ENCODE measurements at regions of chr7 and their contacts with region 1.

Region 1: GRCh38 chr7:136062625-136063325 is 85.6 kb upstream of the MTPN start:
- DNase-seq: no peak
- H3K4me3 Mint-ChIP-seq: no peak overlapping the region
- H3K27ac Mint-ChIP-seq: no peak overlapping the region
- H3K4me1 Mint-ChIP-seq: peaks cover 10% of the 10 kb centered on the region
- H3K27me3 Mint-ChIP-seq: no peaks in the 10 kb centered on the region

Region 2: DNA sequence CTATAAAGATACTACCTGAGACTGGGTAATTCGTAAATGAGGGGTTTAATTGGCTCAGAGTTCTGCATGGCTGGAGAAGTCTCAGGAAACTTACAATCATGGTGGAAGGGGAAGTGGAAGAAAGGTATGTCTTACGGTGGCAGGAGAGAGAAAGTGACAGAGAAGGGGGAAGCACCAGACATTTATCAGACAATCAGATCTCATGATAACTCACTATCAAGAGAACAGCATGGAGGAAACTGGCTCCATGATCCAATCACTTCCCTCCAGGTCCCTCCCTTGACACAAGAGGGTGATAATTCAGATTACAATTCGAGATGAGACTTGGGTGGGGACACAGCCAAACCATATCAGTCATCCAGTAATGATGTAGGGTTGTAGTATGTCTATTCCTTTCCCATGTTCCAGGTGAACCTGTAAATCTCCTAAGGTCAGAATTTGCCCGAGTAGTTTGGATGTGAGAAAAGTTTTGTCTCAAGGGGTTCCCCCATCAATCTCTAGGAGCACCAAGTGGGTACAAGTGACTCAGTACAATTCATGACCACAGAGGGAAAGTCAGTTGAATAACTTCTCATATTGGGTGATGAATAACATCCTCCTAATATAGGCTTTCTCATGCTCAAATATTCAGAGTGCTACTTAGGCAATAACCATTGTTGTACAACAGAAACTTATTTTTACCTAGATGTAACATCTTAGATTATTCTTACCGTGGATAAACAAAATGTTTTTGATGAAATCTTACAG is 46.0 kb before region 1 on chr7:
- intact Hi-C with region 1: loop called (anchors 5 kb)
- DNase-seq: no peak
- H3K4me3 Mint-ChIP-seq: no peak overlapping the region
- H3K27ac Mint-ChIP-seq: no peak overlapping the region
- H3K4me1 Mint-ChIP-seq: peaks cover 3% of the 10 kb centered on the region
- H3K27me3 Mint-ChIP-seq: peaks cover 8% of the 10 kb centered on the region

Region 3: GRCh38 chr7:136030862-136031318 is 31.9 kb before region 1 on chr7:
- intact Hi-C with region 1: loop called (anchors 1 kb)
- DNase-seq: peak; percentile 57
- H3K4me3 Mint-ChIP-seq: peak overlapping the region; percentile 27
- H3K27ac Mint-ChIP-seq: peak overlapping the region; percentile 77
- H3K4me1 Mint-ChIP-seq: peaks cover 13% of the 10 kb centered on the region
- H3K27me3 Mint-ChIP-seq: no peaks in the 10 kb centered on the region

Region 4: GRCh38 chr7:136150311-136150710 is 87.5 kb after region 1 on chr7:
- intact Hi-C with region 1: no loop called
- DNase-seq: no peak
- H3K4me3 Mint-ChIP-seq: no peak overlapping the region
- H3K27ac Mint-ChIP-seq: no peak overlapping the region
- H3K4me1 Mint-ChIP-seq: no peaks in the 10 kb centered on the region
- H3K27me3 Mint-ChIP-seq: no peaks in the 10 kb centered on the region

Measured in activated CD4-positive, alpha-beta T cell treated with anti-CD3 and anti-CD28 coated beads, Interleukin-2, amount 10 ng/mL, durations not matched to agents 24 days and 14 days (primary cell).